Activated naive CD4-positive, alpha-beta T cell treated with anti-CD3 and anti-CD28 coated beads for 36 hours (primary cell): ENCODE measurements at regions of chr6 and their contacts with region 1.

Region 1: DNA sequence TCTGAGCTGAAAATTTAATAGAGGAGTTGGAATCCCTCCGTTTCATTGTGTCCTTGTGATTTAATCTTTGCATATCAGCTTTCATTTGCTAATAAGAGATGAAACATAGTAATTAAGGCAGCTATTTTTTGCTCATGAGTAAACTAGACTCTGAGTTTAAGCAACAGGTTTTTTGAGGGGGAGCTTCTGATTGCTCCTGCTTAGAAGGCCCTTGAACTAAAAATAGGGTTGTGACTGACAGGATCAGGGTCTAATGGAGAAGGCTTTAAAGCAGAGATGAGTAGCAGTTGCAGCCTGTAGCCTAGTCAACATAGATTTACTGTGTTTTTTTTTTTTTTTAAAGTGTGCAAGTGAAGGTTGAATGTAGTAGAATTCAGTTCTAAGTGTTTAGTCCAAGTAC is 17.4 kb downstream of the HSF2 start:
- DNase-seq: no peak
- H3K4me3 Mint-ChIP-seq: no peak overlapping the region
- H3K27ac Mint-ChIP-seq: no peak overlapping the region
- H3K4me1 Mint-ChIP-seq: peaks cover 5% of the 10 kb centered on the region
- H3K27me3 Mint-ChIP-seq: no peaks in the 10 kb centered on the region

Region 2: GRCh38 chr6:122431780-122432179 is 15.0 kb after region 1 on chr6:
- CTCF ChIA-PET with region 1: no interaction called
- intact Hi-C with region 1: loop called (anchors 2 kb)
- DNase-seq: no peak
- H3K4me3 Mint-ChIP-seq: no peak overlapping the region
- H3K27ac Mint-ChIP-seq: no peak overlapping the region
- H3K4me1 Mint-ChIP-seq: peaks cover 22% of the 10 kb centered on the region
- H3K27me3 Mint-ChIP-seq: no peaks in the 10 kb centered on the region